ENCODE measurements at regions of chr3 and their contacts with region 1.

Region 1: DNA sequence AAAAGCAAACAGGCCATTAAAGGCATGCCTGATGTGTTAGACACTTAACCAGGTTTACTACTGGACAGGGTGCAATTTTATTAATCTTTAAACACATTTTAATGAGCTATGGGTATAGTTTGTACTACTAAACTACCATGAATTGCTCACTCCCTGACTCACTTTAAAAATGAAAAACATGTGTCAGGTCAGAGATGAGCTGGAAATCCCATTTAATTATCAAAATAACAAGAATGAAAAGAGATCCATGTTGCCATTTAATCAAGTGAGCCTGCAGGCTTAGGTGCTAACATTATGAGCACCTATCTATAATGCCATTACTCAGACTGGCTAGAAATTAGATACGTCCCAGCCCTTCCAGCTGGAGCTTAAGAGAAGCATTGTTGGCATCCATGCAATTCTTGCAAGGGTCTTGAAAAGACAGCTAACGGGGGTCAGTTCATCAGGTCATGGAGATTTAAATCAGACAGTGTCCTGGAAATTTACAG is 224.4 kb downstream of the THRB start:
- DNase-seq: no peak
- H3K4me3 ChIP-seq: no peak overlapping the region
- H3K4me3 Mint-ChIP-seq: no peak overlapping the region
- H3K27ac Mint-ChIP-seq: no peak overlapping the region
- H3K4me1 ChIP-seq: no peaks in the 10 kb centered on the region
- H3K4me1 Mint-ChIP-seq: peaks cover 6% of the 10 kb centered on the region
- H3K27me3 ChIP-seq: no peaks in the 10 kb centered on the region
- H3K27me3 Mint-ChIP-seq: no peaks in the 10 kb centered on the region
- CTCF ChIP-seq: no peak

Region 2: GRCh38 chr3:24316811-24317383 is 46.6 kb after region 1 on chr3:
- CTCF ChIA-PET with region 1: no interaction called
- POLR2A ChIA-PET with region 1: no interaction called
- intact Hi-C with region 1: loop called (anchors 2 kb)
- DNase-seq: peak; percentile 53 to 64
- H3K4me3 ChIP-seq: no peak overlapping the region
- H3K4me3 Mint-ChIP-seq: peak overlapping the region; percentile 57
- H3K27ac Mint-ChIP-seq: peak overlapping the region; percentile 82
- H3K4me1 ChIP-seq: peaks cover 40% of the 10 kb centered on the region
- H3K4me1 Mint-ChIP-seq: peaks cover 22% of the 10 kb centered on the region
- H3K27me3 ChIP-seq: no peaks in the 10 kb centered on the region
- H3K27me3 Mint-ChIP-seq: no peaks in the 10 kb centered on the region
- CTCF ChIP-seq: no peak